ENCODE measurements at regions of chr11 and their contacts with region 1.

Region 1: GRCh38 chr11:1694064-1694845 is 2.7 kb upstream of the KRTAP5-6 start:
- DNase-seq: peak; percentile 71
- H3K4me3 Mint-ChIP-seq: no peak overlapping the region
- H3K27ac Mint-ChIP-seq: no peak overlapping the region
- H3K4me1 Mint-ChIP-seq: peaks cover 5% of the 10 kb centered on the region
- H3K27me3 Mint-ChIP-seq: peaks cover 14% of the 10 kb centered on the region

Region 2: GRCh38 chr11:1335811-1336761 is 358.2 kb before region 1 on chr11:
- intact Hi-C with region 1: no loop called
- DNase-seq: peak; percentile 38
- H3K4me3 Mint-ChIP-seq: peak overlapping the region; percentile 77
- H3K27ac Mint-ChIP-seq: peak overlapping the region; percentile 59
- H3K4me1 Mint-ChIP-seq: peaks cover 8% of the 10 kb centered on the region
- H3K27me3 Mint-ChIP-seq: peaks cover 9% of the 10 kb centered on the region

Region 3: DNA sequence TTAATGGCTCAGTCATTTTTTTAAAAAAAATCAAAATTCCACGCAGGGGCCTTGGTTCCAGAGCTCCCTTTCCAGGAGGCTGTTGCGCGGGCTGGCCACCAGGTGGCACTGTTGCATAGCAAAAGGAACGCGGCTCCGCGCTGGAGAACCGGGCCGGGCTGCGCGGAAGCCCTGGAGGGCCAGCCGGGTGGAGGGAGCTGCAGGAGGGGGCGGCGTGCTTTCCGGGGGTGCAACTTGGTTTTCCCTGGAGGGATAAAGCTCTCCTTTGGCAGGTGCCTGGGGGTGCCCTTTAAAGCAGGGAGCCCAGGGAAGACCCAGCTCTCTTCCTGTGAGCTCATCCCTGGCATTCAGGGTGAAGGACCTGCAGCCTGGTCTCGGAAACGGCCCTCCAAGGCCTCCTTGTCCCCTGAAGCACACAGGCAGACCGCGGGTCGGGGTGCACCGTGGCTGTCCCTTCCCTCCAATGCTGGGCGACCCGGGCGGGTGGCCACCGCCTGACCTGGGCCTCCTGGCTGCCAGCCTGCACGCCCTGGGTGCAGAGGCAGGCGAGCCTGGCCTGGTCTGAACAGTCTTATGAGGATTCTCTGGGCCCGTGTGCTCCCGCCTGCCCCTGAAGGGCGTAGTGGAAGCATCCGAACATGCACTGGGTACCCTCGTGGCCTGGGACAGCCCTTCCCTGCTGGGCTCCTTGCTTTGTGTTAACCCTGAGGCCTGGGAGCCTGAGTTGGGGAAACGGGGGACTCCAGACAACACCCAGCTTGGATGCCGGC is 41.3 kb before region 1 on chr11:
- intact Hi-C with region 1: loop called (anchors 1 kb)
- DNase-seq: peak; percentile 66
- H3K4me3 Mint-ChIP-seq: no peak overlapping the region
- H3K27ac Mint-ChIP-seq: no peak overlapping the region
- H3K4me1 Mint-ChIP-seq: no peaks in the 10 kb centered on the region
- H3K27me3 Mint-ChIP-seq: peaks cover 6% of the 10 kb centered on the region

Region 4: GRCh38 chr11:1749414-1750312 is 55.4 kb after region 1 on chr11:
- intact Hi-C with region 1: no loop called
- DNase-seq: no peak
- H3K4me3 Mint-ChIP-seq: no peak overlapping the region
- H3K27ac Mint-ChIP-seq: no peak overlapping the region
- H3K4me1 Mint-ChIP-seq: peaks cover 10% of the 10 kb centered on the region
- H3K27me3 Mint-ChIP-seq: peaks cover 12% of the 10 kb centered on the region

Region 5: GRCh38 chr11:1832211-1832919 is 138.1 kb after region 1 on chr11:
- intact Hi-C with region 1: loop called (anchors 1 kb)
- DNase-seq: peak; percentile 51
- H3K4me3 Mint-ChIP-seq: no peak overlapping the region
- H3K27ac Mint-ChIP-seq: no peak overlapping the region
- H3K4me1 Mint-ChIP-seq: no peaks in the 10 kb centered on the region
- H3K27me3 Mint-ChIP-seq: peaks cover 2% of the 10 kb centered on the region

Region 6: DNA sequence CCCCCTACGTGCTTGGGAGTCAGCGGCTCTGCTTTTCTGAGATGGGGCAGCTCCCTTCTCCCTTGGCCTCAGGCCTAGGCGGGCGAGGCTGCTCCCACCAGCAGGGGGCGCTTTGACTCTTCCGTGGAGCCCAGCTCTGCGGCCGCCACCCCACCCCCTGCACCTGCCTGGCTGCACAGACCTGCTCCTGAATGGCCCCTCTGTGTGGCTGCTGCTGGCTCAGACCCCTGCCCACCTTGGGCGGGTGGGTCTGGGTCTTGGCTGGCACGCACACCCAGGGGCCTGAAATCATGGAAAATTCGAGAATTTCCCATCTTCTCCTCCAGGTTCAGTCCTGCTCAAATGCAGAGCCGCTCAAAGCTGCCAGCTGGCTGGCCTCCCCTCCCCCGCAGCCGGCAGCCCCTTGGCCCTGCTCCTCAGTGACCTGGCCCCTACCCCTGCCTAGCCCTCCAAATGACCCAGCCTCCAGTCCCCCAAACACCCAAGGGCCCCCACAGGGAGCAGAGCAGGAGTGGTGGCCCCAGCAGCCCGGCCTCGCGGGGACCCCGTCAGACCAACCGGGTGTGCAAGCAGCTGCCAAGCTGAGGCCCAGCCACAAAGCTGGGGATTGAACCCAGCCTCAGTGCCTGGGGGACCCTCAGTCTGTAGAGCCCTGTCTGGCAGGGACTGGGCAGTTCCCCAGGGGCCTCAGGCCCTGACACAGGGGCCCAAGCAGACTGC is 188.4 kb after region 1 on chr11:
- intact Hi-C with region 1: loop called (anchors 1 kb)
- DNase-seq: peak; percentile 60
- H3K4me3 Mint-ChIP-seq: no peak overlapping the region
- H3K27ac Mint-ChIP-seq: no peak overlapping the region
- H3K4me1 Mint-ChIP-seq: no peaks in the 10 kb centered on the region
- H3K27me3 Mint-ChIP-seq: no peaks in the 10 kb centered on the region